Sigmoid colon (tissue), 7 donors: ENCODE measurements at regions of chr14 and their contacts with region 1.

Region 1: DNA sequence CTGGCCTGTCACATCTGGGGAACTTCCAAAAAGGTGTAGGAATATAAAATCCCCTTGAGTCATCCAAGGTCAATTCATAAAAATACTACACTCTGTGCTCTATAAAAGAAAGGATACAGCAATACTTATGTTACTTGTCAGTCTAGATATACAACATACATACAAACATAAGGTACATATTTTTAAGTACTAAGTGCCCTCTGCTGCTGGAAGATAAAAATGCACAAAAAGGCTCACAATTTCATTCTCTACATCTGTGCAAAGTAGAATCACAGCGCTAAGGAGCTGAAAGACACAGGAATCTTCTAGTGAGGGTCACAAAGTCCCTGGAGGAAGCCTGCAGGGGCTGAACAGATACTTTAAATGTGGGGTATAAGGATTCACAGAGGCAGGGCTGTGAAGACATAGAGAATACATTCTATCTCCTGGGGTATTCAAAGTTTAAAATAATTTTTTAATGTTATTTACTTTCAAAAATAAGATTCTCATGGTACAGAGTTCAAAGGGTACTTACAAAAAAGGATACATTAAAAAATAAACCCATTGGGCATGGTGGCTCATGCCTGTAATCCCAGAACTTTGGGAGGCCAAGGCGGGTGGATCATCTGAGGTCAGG is 10.2 kb upstream of the GOLGA5 start:
- DNase-seq: no peak
- H3K4me3 ChIP-seq: no peak overlapping the region
- H3K27ac ChIP-seq: peak overlapping the region in 2 of 4 donors; percentile 24 to 30
- H3K4me1 ChIP-seq: peaks cover 0 to 19% (median 5%) of the 10 kb centered on the region in 4 donors
- H3K27me3 ChIP-seq: no peaks in the 10 kb centered on the region
- CTCF ChIP-seq: peak; percentile 36 to 67 (median 56)
- EP300 ChIP-seq: no peak
- POLR2A ChIP-seq: no peak

Region 2: GRCh38 chr14:92686900-92687444 is 97.0 kb before region 1 on chr14:
- intact Hi-C with region 1: loop called (anchors 2 kb)
- DNase-seq: peak; percentile 90
- H3K4me3 ChIP-seq: peak overlapping the region; percentile 13 to 46 (median 38)
- H3K27ac ChIP-seq: peak overlapping the region in 3 of 4 donors; percentile 65 to 74 (median 68)
- H3K4me1 ChIP-seq: peaks cover 0 to 24% (median 21%) of the 10 kb centered on the region in 4 donors
- H3K27me3 ChIP-seq: no peaks in the 10 kb centered on the region
- CTCF ChIP-seq: peak; percentile 91 to 95 (median 94)
- EP300 ChIP-seq: no peak
- POLR2A ChIP-seq: no peak

Region 3: GRCh38 chr14:92719890-92720323 is 64.0 kb before region 1 on chr14:
- intact Hi-C with region 1: loop called (anchors 1 kb)
- DNase-seq: peak; percentile 90
- H3K4me3 ChIP-seq: no peak overlapping the region
- H3K27ac ChIP-seq: peak overlapping the region; percentile 3 to 79 (median 75)
- H3K4me1 ChIP-seq: peaks cover 0 to 81% (median 64%) of the 10 kb centered on the region in 4 donors
- H3K27me3 ChIP-seq: no peaks in the 10 kb centered on the region
- CTCF ChIP-seq: no peak
- EP300 ChIP-seq: peak; percentile 2 to 72 (median 40)
- POLR2A ChIP-seq: no peak

Region 4: DNA sequence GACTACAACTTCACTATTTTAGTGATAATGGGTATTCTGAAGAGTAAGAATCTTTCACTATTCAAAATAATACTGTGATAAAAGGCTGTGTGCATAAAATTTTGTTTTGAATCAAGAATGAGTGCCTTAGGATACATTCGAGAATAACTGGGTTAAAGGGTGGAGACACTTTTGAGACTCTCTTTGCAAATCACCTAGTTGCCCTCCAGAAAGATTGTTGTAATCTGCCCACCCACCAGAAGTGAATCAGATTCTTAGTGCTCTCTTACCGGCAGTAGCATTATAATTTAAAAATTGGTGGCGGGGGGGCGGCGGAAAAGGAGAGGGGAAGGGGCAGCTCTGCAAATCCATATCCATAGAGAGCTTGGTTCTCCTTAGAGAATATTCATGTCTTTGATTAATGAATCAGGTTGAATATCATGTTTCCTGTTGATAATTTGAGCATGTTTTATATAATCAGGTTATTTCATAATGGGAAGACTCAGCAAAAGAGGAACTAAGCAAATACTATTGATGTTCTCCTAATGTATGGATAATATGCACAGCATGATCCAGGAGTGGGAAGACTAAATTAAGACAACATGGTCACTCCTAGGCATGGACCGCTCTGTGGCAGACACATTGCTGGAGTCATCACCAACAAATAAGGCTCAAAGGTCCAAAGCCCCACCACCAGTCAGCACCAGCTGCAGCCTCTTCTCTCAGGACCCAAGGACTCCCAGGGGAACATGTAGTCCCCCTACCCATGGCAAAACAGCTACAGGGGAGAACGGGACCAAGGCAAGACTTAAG is 76.3 kb after region 1 on chr14:
- intact Hi-C with region 1: no loop called
- DNase-seq: no peak
- H3K4me3 ChIP-seq: no peak overlapping the region
- H3K27ac ChIP-seq: no peak overlapping the region
- H3K4me1 ChIP-seq: no peaks in the 10 kb centered on the region
- H3K27me3 ChIP-seq: no peaks in the 10 kb centered on the region
- CTCF ChIP-seq: no peak
- EP300 ChIP-seq: no peak
- POLR2A ChIP-seq: no peak

Region 5: DNA sequence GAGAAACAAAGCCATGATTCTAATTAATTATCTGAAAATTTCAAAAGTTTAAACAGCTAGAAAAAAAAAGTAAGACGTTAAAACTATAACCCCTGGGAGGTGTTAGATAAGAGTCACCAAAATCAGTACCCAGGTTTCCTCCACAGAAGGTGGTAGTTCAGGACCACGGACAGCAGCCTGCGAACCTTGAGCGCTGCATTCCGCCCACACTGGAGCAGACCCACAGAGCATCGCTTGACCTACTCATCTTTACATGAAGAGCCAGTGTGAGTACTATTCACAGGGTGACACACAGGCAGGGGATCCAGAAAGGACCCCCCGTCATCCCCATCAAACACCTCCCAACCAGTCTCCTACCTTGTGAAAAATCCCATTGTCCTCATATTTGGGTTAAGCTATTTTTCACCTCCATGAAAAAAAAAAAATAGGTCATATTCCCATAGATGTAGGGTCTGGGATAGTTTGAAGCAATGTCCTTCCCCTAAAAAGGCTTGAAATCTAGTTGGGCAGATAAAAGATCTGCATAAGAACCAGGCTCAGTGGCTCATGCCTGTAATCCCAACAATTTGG is 130.2 kb after region 1 on chr14:
- intact Hi-C with region 1: no loop called
- DNase-seq: no peak
- H3K4me3 ChIP-seq: no peak overlapping the region
- H3K27ac ChIP-seq: no peak overlapping the region
- H3K4me1 ChIP-seq: no peaks in the 10 kb centered on the region
- H3K27me3 ChIP-seq: peaks cover 0 to 6% (median 0%) of the 10 kb centered on the region in 3 donors
- CTCF ChIP-seq: no peak
- EP300 ChIP-seq: no peak
- POLR2A ChIP-seq: no peak

Region 6: DNA sequence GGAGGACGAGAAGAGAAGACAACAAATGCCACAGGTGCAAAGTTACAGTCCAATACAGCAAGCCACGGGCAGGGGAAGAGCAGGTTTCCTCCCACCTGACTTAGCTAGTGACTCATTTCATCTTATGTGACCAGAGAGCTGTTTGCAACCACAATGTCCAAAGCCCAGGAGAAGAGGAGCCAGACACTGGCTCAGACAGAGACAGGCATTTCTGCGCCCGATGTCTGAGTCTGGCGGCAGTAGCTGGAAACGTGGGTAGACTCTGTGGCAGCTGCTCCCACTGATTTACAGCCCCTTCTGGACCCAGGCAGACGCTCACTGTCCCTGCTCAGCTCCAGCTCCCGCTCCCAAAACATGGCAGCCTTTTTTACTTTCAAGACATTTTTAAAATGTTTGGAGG is 199.0 kb after region 1 on chr14:
- intact Hi-C with region 1: no loop called
- DNase-seq: no peak
- H3K4me3 ChIP-seq: no peak overlapping the region
- H3K27ac ChIP-seq: peak overlapping the region in 3 of 4 donors; percentile 61 to 84 (median 66)
- H3K4me1 ChIP-seq: peaks cover 0 to 52% (median 37%) of the 10 kb centered on the region in 4 donors
- H3K27me3 ChIP-seq: no peaks in the 10 kb centered on the region
- CTCF ChIP-seq: no peak
- EP300 ChIP-seq: no peak
- POLR2A ChIP-seq: no peak